ENCODE measurements at regions of chr20 and their contacts with region 1.

Region 1: DNA sequence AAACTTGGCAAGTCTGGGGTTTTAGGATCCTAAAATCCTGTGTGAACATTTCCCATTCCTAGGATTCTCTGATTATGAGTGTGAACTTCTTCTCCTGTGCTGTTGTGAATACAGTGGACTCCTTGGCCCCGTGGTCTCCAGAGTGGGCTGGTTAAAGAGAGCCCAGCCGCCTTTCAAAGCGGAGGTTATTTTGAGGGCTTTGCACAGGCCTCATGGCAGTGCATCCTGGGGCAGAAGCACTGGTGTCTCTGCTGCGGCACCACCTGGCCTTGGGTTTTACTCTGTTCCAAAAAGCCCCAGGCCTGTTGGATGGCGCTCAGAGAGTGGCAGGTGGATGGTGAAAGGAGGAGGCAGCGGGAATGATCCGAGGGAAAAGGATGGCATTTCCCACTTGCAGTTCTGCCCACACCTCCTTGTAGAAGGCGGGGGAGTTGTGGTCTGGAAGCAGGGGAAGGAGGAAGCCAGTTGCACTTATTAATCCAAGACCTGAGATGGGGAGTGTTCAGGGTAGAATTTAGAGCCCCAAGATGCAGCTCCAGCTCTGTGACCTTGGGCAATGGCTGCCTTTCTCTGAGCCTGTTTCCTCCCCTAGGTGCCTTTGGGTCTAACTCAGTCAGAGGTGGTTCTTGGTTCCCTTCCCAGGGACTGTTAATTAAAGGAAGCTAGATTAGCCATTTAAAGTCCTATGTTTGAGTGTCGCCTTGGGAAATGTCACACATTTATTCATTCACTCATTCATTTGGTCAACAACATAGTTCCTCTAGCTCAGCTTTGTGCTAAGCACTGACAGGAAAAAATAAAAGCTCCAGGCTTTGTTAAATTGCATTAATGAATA is 22.4 kb downstream of the MMP24 start:
- DNase-seq: no peak
- H3K4me3 ChIP-seq: no peak overlapping the region
- H3K27ac ChIP-seq: no peak overlapping the region
- H3K4me1 ChIP-seq: no peaks in the 10 kb centered on the region
- H3K27me3 ChIP-seq: no peaks in the 10 kb centered on the region
- CTCF ChIP-seq: no peak

Region 2: DNA sequence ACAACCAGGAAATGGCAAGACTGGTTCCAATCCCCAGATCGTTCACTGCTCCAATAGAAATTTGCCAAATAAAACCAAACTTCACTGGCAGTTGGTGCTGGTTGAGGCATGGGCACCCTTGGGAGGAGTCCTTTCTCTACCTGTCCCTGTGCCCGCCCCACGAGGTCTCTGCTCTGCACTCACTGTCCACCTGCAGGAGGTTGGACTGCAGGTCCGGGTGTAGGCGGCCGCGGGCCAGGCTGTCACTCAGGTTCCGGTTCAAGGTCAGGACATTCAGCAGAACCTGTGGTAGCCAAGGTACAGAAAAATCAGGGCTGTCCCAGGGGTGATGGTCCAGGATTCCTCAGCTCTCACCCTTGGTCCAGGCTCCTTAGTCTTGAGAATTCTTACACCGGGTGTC is 399.1 kb before region 1 on chr20:
- CTCF ChIA-PET with region 1: no interaction called
- dilution Hi-C with region 1: loop called (anchors 10 kb)
- in situ Hi-C with region 1: loop called in 1 of 2 experiments (anchors 25 kb)
- intact Hi-C with region 1: no loop called
- DNase-seq: no peak
- H3K4me3 ChIP-seq: no peak overlapping the region
- H3K27ac ChIP-seq: no peak overlapping the region
- H3K4me1 ChIP-seq: no peaks in the 10 kb centered on the region
- H3K27me3 ChIP-seq: no peaks in the 10 kb centered on the region
- CTCF ChIP-seq: no peak

Region 3: DNA sequence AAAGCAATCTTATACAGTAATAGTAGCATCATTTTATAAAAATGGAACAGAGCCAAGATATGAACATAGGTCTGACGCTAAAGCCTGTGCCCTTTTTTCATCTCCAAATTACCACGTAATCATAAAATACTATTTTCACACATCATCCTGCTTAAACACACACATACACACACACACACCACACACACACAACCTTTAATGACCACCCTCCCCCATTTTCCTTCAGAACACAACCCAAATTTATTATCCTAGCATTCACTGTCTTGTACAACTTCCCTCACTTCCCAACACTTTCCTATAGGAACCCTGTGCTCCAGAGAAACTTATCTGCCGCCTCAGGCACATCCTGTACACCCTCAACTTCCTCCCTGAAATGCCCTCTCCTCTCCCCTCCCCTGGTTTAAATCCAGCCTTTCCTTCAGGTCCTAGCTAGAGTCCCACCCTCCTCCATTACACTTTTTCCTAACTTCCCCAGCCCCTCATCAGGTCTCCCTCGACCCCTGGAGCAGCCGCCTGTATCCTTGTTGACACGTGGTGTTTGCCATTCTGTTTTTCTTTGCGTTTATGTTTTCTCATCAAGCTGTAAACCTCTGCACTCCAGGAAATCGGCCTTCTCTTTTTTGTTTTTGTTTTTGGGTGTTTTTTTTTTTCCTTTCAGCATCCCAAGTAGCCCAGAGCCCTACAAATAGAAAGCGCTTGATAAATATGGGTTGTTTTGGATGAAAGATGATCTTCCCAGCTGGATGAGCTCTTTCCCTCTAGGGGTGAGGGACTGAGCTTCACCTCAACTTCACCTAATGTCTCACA is 23.3 kb before region 1 on chr20:
- CTCF ChIA-PET with region 1: no interaction called
- dilution Hi-C with region 1: no loop called
- in situ Hi-C with region 1: no loop called
- intact Hi-C with region 1: no loop called
- DNase-seq: no peak
- H3K4me3 ChIP-seq: no peak overlapping the region
- H3K27ac ChIP-seq: no peak overlapping the region
- H3K4me1 ChIP-seq: no peaks in the 10 kb centered on the region
- H3K27me3 ChIP-seq: peaks cover 8% of the 10 kb centered on the region
- CTCF ChIP-seq: no peak

Region 4: DNA sequence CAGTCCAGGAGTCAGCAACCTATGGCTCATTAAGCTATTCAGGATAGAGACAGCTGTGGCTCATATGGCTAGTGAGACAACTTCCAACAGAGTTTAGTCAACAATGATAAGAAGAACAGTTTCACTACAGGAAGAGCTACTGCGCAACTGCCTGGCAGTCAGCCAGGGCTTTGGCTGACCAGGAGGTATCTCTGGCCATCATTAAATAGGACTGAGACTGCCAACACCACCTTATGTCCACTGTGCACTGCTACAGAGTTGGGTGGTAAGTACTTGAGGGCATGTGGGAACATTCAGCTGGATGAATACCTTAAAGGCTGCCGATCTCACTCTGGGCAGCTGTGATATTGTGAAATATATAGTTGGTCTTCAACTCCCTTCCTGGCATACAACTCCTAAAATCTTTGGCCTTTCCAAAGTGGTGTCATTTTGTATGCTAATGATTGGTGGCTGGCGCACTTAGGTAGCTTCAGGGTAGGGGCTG is 95.5 kb after region 1 on chr20:
- CTCF ChIA-PET with region 1: no interaction called
- dilution Hi-C with region 1: loop called (anchors 5 kb)
- in situ Hi-C with region 1: no loop called
- intact Hi-C with region 1: no loop called
- DNase-seq: peak; percentile 69
- H3K4me3 ChIP-seq: no peak overlapping the region
- H3K27ac ChIP-seq: no peak overlapping the region
- H3K4me1 ChIP-seq: peaks cover 35% of the 10 kb centered on the region
- H3K27me3 ChIP-seq: no peaks in the 10 kb centered on the region
- CTCF ChIP-seq: no peak

Measured in mammary epithelial cell (primary cell).